Activated CD8-positive, alpha-beta memory T cell treated with anti-CD3 and anti-CD28 coated beads, Interleukin-2, amount 10 ng/mL, durations not matched to agents 7 days and 5 days (primary cell): ENCODE measurements at regions of chr1 and their contacts with region 1.

Region 1: GRCh38 chr1:23524716-23525401 is 6.2 kb downstream of the E2F2 start:
- DNase-seq: peak; percentile 69
- ATAC-seq: peak; percentile 11
- H3K4me3 Mint-ChIP-seq: peak overlapping the region; percentile 71
- H3K27ac Mint-ChIP-seq: peak overlapping the region; percentile 85
- H3K4me1 Mint-ChIP-seq: peaks cover 69% of the 10 kb centered on the region
- H3K27me3 Mint-ChIP-seq: no peaks in the 10 kb centered on the region

Region 2: GRCh38 chr1:23478896-23479665 is 45.8 kb before region 1 on chr1:
- CTCF ChIA-PET with region 1: no interaction called
- DNase-seq: no peak
- ATAC-seq: no peak
- H3K4me3 Mint-ChIP-seq: no peak overlapping the region
- H3K27ac Mint-ChIP-seq: no peak overlapping the region
- H3K4me1 Mint-ChIP-seq: peaks cover 11% of the 10 kb centered on the region
- H3K27me3 Mint-ChIP-seq: peaks cover 39% of the 10 kb centered on the region

Region 3: GRCh38 chr1:23514111-23514679 is 10.7 kb before region 1 on chr1:
- CTCF ChIA-PET with region 1: interaction called, 25 read pairs
- DNase-seq: no peak
- ATAC-seq: no peak
- H3K4me3 Mint-ChIP-seq: no peak overlapping the region
- H3K27ac Mint-ChIP-seq: no peak overlapping the region
- H3K4me1 Mint-ChIP-seq: no peaks in the 10 kb centered on the region
- H3K27me3 Mint-ChIP-seq: no peaks in the 10 kb centered on the region